ENCODE measurements at regions of chr4 and their contacts with region 1.

Region 1: DNA sequence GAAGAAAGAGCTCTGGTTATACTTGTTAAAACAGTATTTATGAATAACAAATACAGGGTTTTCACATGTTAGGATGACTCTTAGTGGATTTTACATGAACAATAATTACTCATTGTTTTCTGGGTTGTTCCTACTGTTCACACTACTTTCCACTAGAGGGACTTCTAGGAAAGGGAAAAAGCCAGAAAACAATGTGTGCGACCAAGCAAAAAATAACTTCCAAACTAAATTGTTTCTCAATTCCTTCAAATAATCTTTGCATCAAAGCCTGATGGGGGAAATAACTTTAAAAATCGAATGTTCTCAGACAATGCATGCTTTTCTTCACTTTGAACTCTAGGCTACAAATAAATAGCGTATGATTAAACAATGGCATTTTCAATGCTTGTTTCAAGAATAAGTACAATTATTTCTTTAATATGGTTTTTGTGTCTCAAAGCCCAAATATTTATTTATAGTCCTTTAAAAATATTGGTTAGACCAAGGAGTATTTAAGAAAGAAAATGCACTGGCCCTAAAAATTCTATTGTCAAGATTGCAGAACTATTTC is 72.1 kb upstream of the ETNPPL start:
- DNase-seq: peak; percentile 53
- H3K4me3 ChIP-seq: no peak overlapping the region
- H3K27ac ChIP-seq: no peak overlapping the region
- H3K4me1 ChIP-seq: no peaks in the 10 kb centered on the region
- H3K27me3 ChIP-seq: peaks cover 0 to 6% of the 10 kb centered on the region in 2 experiments
- CTCF ChIP-seq: peak; percentile 49 to 60
- POLR2A ChIP-seq: no peak

Region 2: DNA sequence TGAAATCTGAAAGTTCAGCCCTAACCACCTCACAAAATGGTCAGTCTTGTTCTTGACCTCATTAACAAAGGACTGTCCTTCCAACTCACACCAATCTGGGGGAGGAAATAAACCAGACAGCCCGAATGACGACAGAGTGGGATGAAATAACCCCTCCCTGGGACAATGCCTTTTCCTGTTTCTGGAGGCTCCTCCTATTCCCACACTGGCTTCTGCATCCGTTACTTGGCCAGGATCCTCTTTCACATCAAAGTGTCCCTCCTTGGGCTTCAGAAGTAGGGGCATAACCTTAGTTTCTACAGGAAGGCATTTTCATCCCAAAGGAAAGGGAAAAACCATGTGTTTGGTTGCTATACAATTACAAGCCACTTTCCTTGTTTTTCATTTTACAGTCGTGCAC is 274.3 kb before region 1 on chr4:
- CTCF ChIA-PET with region 1: no interaction called
- POLR2A ChIA-PET with region 1: no interaction called
- dilution Hi-C with region 1: no loop called
- intact Hi-C with region 1: no loop called
- DNase-seq: peak; percentile 38
- H3K4me3 ChIP-seq: no peak overlapping the region
- H3K27ac ChIP-seq: no peak overlapping the region
- H3K4me1 ChIP-seq: no peaks in the 10 kb centered on the region
- H3K27me3 ChIP-seq: peaks cover 0 to 3% of the 10 kb centered on the region in 2 experiments
- CTCF ChIP-seq: no peak
- POLR2A ChIP-seq: no peak

Region 3: GRCh38 chr4:109026588-109026987 is 191.7 kb after region 1 on chr4:
- CTCF ChIA-PET with region 1: interaction called, 3 read pairs
- POLR2A ChIA-PET with region 1: no interaction called
- dilution Hi-C with region 1: no loop called
- intact Hi-C with region 1: loop called (anchors 10 kb)
- DNase-seq: peak; percentile 56
- H3K4me3 ChIP-seq: peak overlapping the region in 1 of 3 experiments; percentile 46
- H3K27ac ChIP-seq: peak overlapping the region; percentile 86
- H3K4me1 ChIP-seq: peaks cover 23% of the 10 kb centered on the region
- H3K27me3 ChIP-seq: no peaks in the 10 kb centered on the region
- CTCF ChIP-seq: no peak
- POLR2A ChIP-seq: no peak

Region 4: DNA sequence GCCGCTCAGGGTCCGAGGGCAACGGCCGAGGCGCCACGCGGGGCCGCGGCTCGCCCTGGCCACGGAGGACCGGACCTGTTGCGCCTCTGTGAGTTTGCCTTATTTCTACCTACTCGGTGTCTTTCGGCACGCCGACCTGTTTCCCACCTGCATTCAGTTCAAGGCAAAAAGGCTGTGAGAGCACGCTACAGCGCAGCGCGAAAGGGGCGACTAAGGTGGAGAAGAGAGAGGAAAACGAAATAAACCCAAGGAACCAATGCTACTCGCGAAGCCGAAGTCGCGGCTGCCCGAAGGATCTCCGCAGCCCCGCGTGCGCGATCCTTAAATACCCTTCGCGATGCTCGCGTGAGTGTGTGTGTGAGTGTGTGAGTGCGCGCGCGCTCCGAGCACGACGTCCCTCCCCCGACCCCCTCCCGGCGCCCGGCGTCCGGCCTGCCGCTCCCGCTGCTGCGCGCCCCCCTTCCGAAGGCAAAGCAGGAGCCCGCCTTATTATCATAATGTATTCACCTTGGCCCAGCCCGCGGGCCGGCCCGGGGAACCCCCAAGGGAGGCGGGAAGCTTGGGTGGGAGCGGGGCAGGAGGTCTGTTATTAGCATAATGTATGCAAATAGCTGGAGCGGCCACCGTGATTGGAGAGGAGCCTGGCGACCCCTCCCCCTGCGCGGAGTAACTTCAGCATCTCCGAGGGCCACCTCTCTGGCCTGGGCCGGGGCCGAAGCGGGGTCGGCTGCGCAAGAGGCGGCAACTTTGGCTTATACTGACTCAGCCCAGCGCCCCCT is 467.6 kb after region 1 on chr4 and contains the start of gene COL25A1:
- CTCF ChIA-PET with region 1: interaction called, 19 read pairs
- POLR2A ChIA-PET with region 1: interaction called, 3 read pairs
- dilution Hi-C with region 1: no loop called
- intact Hi-C with region 1: loop called (anchors 1 kb)
- DNase-seq: peak; percentile 60
- H3K4me3 ChIP-seq: peak within 1 kb of the TSS; percentile 12 to 75 (median 38)
- H3K27ac ChIP-seq: no peak within 1 kb of the TSS
- H3K4me1 ChIP-seq: peaks cover 16% of the 10 kb centered on the region
- H3K27me3 ChIP-seq: peaks cover 22 to 42% of the 10 kb centered on the region in 2 experiments
- CTCF ChIP-seq: no peak
- POLR2A ChIP-seq: no peak
- total RNA-seq, gene COL25A1: 3.5 and 3.9 TPM in 2 replicates

Region 5: GRCh38 chr4:109332926-109333464 is 498.1 kb after region 1 on chr4:
- CTCF ChIA-PET with region 1: interaction called, 6 read pairs
- POLR2A ChIA-PET with region 1: no interaction called
- dilution Hi-C with region 1: no loop called
- intact Hi-C with region 1: loop called (anchors 1 kb)
- DNase-seq: no peak
- H3K4me3 ChIP-seq: no peak overlapping the region
- H3K27ac ChIP-seq: no peak overlapping the region
- H3K4me1 ChIP-seq: no peaks in the 10 kb centered on the region
- H3K27me3 ChIP-seq: no peaks in the 10 kb centered on the region
- CTCF ChIP-seq: peak in 1 of 2 donors; percentile 30
- POLR2A ChIP-seq: no peak

Region 6: DNA sequence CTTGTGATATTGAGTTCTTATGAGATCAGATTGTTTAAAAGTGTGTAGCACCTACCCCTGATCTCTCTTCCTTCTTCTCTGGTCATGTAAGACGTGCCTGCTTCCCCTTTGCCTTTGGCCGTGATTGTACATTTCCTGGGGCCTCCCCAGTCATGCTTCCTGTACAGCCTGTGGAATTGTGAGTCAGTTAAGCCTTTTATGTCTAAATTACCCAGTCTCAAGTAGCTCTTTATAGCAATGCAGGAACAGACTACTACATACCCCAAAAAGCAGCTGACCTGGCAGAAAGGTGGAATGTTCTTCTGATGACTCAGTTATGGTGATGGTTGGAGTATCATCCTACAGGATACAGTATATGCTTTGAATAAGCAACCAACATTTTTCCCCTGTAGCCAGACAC is 713.7 kb after region 1 on chr4:
- CTCF ChIA-PET with region 1: no interaction called
- POLR2A ChIA-PET with region 1: no interaction called
- dilution Hi-C with region 1: no loop called
- intact Hi-C with region 1: no loop called
- DNase-seq: peak; percentile 94
- H3K4me3 ChIP-seq: peak overlapping the region in 1 of 3 experiments; percentile 1
- H3K27ac ChIP-seq: peak overlapping the region; percentile 84
- H3K4me1 ChIP-seq: peaks cover 17% of the 10 kb centered on the region
- H3K27me3 ChIP-seq: no peaks in the 10 kb centered on the region
- CTCF ChIP-seq: no peak
- POLR2A ChIP-seq: peak; percentile 36

Measured in endothelial cell of umbilical vein (primary cell).